ENCODE measurements at regions of chr1 and their contacts with region 1.

Region 1: DNA sequence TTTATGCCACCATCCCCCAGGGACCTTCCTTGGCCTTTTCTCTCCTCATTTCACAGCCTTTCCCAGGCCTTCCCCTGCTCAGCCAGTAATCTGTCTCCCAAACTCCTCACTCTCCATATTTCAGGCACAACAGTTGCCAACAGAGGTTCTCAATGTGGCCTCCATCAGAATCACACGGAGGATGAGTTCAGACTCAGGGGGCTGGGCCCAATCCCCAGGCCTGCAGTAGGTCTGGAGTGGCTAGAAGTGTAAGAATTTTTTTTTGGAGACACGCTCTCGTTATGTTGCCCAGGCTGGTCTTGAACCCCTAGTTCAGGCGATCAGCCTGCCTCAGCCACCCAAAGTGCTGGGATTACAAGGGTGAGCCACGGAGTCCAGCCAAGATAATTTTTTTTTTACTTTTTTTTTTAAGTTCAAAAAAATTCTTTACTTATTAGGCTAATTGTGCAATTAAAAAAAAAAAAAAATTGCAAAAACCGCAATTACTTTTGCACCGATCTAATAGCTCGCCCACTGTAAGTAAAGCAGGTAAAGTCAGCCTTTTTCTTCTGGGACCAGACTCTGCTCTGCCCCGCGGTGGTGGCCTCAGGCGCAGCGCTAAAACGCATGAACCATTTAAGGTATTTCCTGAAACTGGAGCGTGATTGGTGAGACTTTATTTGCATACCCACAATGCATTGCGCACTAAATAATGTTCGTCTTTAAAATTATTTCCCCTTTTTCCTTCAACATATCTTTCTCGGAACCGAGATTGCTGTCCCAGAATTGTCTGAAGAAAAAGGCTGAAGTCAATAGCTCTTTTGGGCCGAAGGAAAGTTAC is 18.7 kb downstream of the KIAA2013 start:
- DNase-seq: peak; percentile 97
- H3K4me3 ChIP-seq: no peak overlapping the region
- H3K27ac ChIP-seq: peak overlapping the region; percentile 100
- H3K4me1 ChIP-seq: peaks cover 3% of the 10 kb centered on the region
- H3K27me3 ChIP-seq: no peaks in the 10 kb centered on the region
- CTCF ChIP-seq: peak; percentile 50 to 89
- POLR2A ChIP-seq: no peak

Region 2: DNA sequence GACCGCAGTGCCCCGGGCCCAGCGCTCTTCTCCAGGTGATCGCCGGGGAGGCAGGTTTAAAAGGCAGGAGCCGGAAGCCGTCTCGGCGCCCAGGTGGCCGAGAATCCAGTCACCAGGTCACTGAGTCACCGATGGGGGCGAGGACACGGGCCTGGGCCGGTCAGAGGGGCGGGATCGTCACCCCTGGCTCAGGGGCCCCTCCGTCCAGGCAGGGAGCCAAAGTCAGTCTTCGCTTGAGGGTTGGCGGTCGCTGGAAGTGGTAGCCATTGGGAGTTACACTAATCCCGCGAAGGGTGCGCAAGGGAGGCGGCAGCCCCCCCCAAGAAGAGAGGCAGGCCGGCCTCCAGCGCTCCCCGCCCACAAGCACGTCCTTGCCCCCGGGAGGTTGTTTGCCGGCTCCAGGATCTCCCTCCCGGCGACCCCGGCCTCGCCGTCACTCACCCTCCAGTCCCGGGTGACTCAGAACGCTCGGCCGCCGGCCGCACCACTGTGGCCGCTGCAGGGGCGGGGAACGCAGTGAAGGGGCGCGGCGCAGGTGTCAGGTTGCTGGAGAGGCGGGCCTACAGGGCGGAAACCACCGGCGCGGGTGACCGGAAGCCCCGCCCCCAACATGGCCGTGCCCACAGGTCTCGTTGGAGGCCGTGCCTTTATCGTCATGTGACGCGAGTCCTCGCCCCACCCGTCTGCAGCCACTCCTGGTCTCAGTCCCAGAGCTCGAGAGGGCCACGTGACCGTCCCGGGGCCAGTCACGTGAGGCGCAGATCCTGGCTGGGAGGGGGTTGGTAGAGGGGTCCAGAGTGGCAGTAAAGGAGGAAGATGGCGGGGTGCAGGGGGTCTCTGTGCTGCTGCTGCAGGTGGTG is 101.8 kb before region 1 on chr1 and contains the starts of genes CLCN6 and MTHFR:
- CTCF ChIA-PET with region 1: no interaction called
- POLR2A ChIA-PET with region 1: interaction called, 11 read pairs
- dilution Hi-C with region 1: no loop called
- intact Hi-C with region 1: loop called (anchors 1 kb)
- DNase-seq: peak; percentile 100
- H3K4me3 ChIP-seq: peak within 1 kb of the TSS; percentile 75 to 97 (median 93)
- H3K27ac ChIP-seq: peak within 1 kb of the TSS; percentile 85
- H3K4me1 ChIP-seq: peaks cover 51% of the 10 kb centered on the region
- H3K27me3 ChIP-seq: no peaks in the 10 kb centered on the region
- CTCF ChIP-seq: no peak
- POLR2A ChIP-seq: peak; percentile 58
- total RNA-seq, gene CLCN6: 41.2 and 43.3 TPM in 2 replicates
- total RNA-seq, gene MTHFR: 25.3 and 26.5 TPM in 2 replicates

Region 3: GRCh38 chr1:11918779-11919519 is 11.5 kb after region 1 on chr1:
- CTCF ChIA-PET with region 1: interaction called, 5 read pairs
- POLR2A ChIA-PET with region 1: interaction called, 44 read pairs
- dilution Hi-C with region 1: no loop called
- intact Hi-C with region 1: no loop called
- DNase-seq: no peak
- H3K4me3 ChIP-seq: no peak overlapping the region
- H3K27ac ChIP-seq: no peak overlapping the region
- H3K4me1 ChIP-seq: peaks cover 3% of the 10 kb centered on the region
- H3K27me3 ChIP-seq: no peaks in the 10 kb centered on the region
- CTCF ChIP-seq: no peak
- POLR2A ChIP-seq: no peak

Region 4: GRCh38 chr1:11934302-11935056 is 27.0 kb after region 1 on chr1 and contains the start of gene PLOD1:
- CTCF ChIA-PET with region 1: interaction called, 3 read pairs
- POLR2A ChIA-PET with region 1: interaction called, 46 read pairs
- dilution Hi-C with region 1: no loop called
- intact Hi-C with region 1: loop called (anchors 1 kb)
- DNase-seq: peak; percentile 91
- H3K4me3 ChIP-seq: peak within 1 kb of the TSS; percentile 41 to 70 (median 59)
- H3K27ac ChIP-seq: peak within 1 kb of the TSS; percentile 36
- H3K4me1 ChIP-seq: peaks cover 33% of the 10 kb centered on the region
- H3K27me3 ChIP-seq: no peaks in the 10 kb centered on the region
- CTCF ChIP-seq: no peak
- POLR2A ChIP-seq: peak; percentile 89
- total RNA-seq, gene PLOD1: 245 and 260 TPM in 2 replicates

Region 5: GRCh38 chr1:11979851-11980675 is 72.6 kb after region 1 on chr1 and contains the start of gene MFN2:
- CTCF ChIA-PET with region 1: interaction called, 6 read pairs
- POLR2A ChIA-PET with region 1: interaction called, 100 read pairs
- dilution Hi-C with region 1: no loop called
- intact Hi-C with region 1: loop called (anchors 1 kb)
- DNase-seq: peak; percentile 99
- H3K4me3 ChIP-seq: peak within 1 kb of the TSS; percentile 86 to 94 (median 89)
- H3K27ac ChIP-seq: peak within 1 kb of the TSS; percentile 69
- H3K4me1 ChIP-seq: peaks cover 18% of the 10 kb centered on the region
- H3K27me3 ChIP-seq: no peaks in the 10 kb centered on the region
- CTCF ChIP-seq: no peak
- POLR2A ChIP-seq: peak; percentile 61
- total RNA-seq, gene MFN2: 66.6 and 82.4 TPM in 2 replicates

Region 6: DNA sequence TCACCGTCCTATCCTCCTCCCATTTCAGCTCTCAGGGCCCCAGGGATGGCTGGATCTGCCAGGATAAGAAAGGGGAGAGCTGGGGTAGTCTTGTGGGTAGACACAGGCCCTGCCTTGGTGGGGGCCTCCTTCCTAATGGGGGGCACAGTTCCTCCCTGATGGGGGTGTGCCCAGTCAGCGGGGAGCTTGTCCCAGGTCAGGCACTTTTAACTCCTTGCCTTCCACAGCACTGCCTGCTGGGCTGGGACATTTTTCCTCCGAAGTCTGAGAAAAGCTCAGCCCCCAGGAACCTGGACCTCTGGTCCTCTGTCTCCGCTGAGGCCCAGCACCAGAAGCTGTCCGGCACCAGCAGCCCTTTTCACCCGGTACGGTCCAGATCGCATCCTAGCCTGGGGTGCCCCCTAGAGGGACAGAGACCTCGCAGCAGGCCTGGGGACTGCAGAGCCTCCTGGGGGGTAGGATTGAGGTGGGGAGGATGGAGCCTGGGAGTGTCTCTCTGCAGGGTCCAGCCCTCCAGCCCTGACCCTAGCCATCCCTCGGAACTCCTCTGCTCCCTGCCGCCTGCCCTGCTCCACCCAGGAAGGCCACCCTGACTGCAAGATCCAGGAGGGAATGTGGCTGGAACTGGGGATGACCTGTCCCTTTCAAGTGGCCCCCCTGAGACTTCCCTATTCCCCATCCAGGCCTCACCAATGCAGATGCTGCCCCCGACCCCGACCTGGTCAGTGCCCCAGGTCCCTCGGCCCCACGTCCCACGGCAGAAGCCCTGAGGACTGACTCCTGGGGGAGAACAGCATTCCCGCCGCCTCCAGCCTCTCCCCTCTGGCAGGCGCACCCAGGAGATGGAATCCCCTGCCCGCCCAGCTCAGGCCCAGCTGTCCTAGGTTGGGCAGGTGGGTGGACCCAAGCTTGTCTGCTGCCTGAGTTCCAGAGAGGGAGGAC is 123.8 kb after region 1 on chr1:
- CTCF ChIA-PET with region 1: interaction called, 4 read pairs
- POLR2A ChIA-PET with region 1: interaction called, 3 read pairs
- dilution Hi-C with region 1: no loop called
- intact Hi-C with region 1: loop called (anchors 1 kb)
- DNase-seq: peak; percentile 16
- H3K4me3 ChIP-seq: no peak overlapping the region
- H3K27ac ChIP-seq: no peak overlapping the region
- H3K4me1 ChIP-seq: no peaks in the 10 kb centered on the region
- H3K27me3 ChIP-seq: no peaks in the 10 kb centered on the region
- CTCF ChIP-seq: peak; percentile 45 to 70
- POLR2A ChIP-seq: no peak

Measured in endothelial cell of umbilical vein (primary cell).